A549 (cell line): ENCODE measurements at regions of chr7 and their contacts with region 1.

Region 1: DNA sequence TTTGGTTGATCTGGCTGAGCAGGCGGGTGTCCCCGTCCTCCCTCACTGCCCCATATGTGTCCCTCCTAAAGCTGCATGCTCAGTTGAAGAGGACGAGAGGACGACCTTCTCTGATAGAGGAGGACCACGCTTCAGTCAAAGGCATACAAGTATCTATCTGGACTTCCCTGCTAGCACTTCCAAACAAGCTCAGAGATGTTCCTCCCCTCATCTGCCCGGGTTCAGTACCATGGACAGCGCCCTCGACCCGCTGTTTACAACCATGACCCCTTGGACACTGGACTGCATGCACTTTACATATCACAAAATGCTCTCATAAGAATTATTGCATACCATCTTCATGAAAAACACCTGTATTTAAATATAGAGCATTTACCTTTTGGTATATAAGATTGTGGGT is 26.9 kb upstream of the TRIM56 start:
- DNase-seq: peak; percentile 43 to 51
- ATAC-seq: peak in 1 of 2 experiments; percentile 50; a peak in 2 of 6 replicates
- H3K4me3 ChIP-seq: no peak overlapping the region
- H3K27ac ChIP-seq: no peak overlapping the region
- H3K4me1 ChIP-seq: no peaks in the 10 kb centered on the region
- CTCF ChIP-seq: no peak
- EP300 ChIP-seq: no peak
- POLR2A ChIP-seq: no peak
- RAD21 ChIP-seq: no peak

Region 2: GRCh38 chr7:100896732-100897608 is 161.4 kb before region 1 on chr7:
- CTCF ChIA-PET with region 1: interaction called, 45 read pairs
- POLR2A ChIA-PET with region 1: interaction called, 3 read pairs
- DNase-seq: no peak
- ATAC-seq: peak; percentile 45 to 50
- H3K4me3 ChIP-seq: peak overlapping the region; percentile 49
- H3K27ac ChIP-seq: peak overlapping the region; percentile 20 to 69; a peak in 4 of 6 replicates
- H3K4me1 ChIP-seq: peaks cover 19% of the 10 kb centered on the region
- CTCF ChIP-seq: peak; percentile 90
- EP300 ChIP-seq: no peak
- POLR2A ChIP-seq: no peak
- RAD21 ChIP-seq: peak; percentile 65 to 83

Region 3: GRCh38 chr7:100933735-100934134 is 124.6 kb before region 1 on chr7:
- CTCF ChIA-PET with region 1: interaction called, 14 read pairs
- POLR2A ChIA-PET with region 1: no interaction called
- DNase-seq: no peak
- ATAC-seq: peak in 1 of 2 experiments; percentile 40; a peak in 1 of 6 replicates
- H3K4me3 ChIP-seq: no peak overlapping the region
- H3K27ac ChIP-seq: no peak overlapping the region
- H3K4me1 ChIP-seq: no peaks in the 10 kb centered on the region
- CTCF ChIP-seq: no peak
- EP300 ChIP-seq: no peak
- POLR2A ChIP-seq: no peak
- RAD21 ChIP-seq: no peak

Region 4: GRCh38 chr7:100957832-100958421 is 100.4 kb before region 1 on chr7:
- CTCF ChIA-PET with region 1: interaction called, 26 read pairs
- POLR2A ChIA-PET with region 1: no interaction called
- DNase-seq: peak in 1 of 2 experiments; percentile 35
- ATAC-seq: peak in 1 of 2 experiments; percentile 48; a peak in 3 of 6 replicates
- H3K4me3 ChIP-seq: no peak overlapping the region
- H3K27ac ChIP-seq: no peak overlapping the region
- H3K4me1 ChIP-seq: no peaks in the 10 kb centered on the region
- CTCF ChIP-seq: no peak
- EP300 ChIP-seq: no peak
- POLR2A ChIP-seq: 0 out of 2 replicates have a peak, but pooled peaks have one; percentile 9
- RAD21 ChIP-seq: no peak

Region 5: GRCh38 chr7:100974018-100974417 is 84.3 kb before region 1 on chr7:
- CTCF ChIA-PET with region 1: interaction called, 32 read pairs
- POLR2A ChIA-PET with region 1: no interaction called
- DNase-seq: peak in 1 of 2 experiments; percentile 75
- ATAC-seq: peak; percentile 32 to 62; a peak in 4 of 6 replicates
- H3K4me3 ChIP-seq: no peak overlapping the region
- H3K27ac ChIP-seq: peak overlapping the region; percentile 46 to 65; a peak in 4 of 6 replicates
- H3K4me1 ChIP-seq: peaks cover 26% of the 10 kb centered on the region
- CTCF ChIP-seq: no peak
- EP300 ChIP-seq: peak in 1 of 2 experiments; percentile 24; a peak in 1 of 5 replicates
- POLR2A ChIP-seq: no peak
- RAD21 ChIP-seq: no peak

Region 6: GRCh38 chr7:101077303-101078089 is 19.1 kb after region 1 on chr7:
- CTCF ChIA-PET with region 1: interaction called, 18 read pairs
- POLR2A ChIA-PET with region 1: no interaction called
- DNase-seq: peak; percentile 78 to 85
- ATAC-seq: peak; percentile 99 to 100
- H3K4me3 ChIP-seq: no peak overlapping the region
- H3K27ac ChIP-seq: 0 out of 6 replicates have a peak overlapping the region, but pooled peaks of 1 of the 2 experiments have one; percentile 12
- H3K4me1 ChIP-seq: no peaks in the 10 kb centered on the region
- CTCF ChIP-seq: peak; percentile 91
- EP300 ChIP-seq: no peak
- POLR2A ChIP-seq: no peak
- RAD21 ChIP-seq: peak; percentile 89 to 96